ENCODE measurements at regions of chr4 and their contacts with region 1.

Region 1: DNA sequence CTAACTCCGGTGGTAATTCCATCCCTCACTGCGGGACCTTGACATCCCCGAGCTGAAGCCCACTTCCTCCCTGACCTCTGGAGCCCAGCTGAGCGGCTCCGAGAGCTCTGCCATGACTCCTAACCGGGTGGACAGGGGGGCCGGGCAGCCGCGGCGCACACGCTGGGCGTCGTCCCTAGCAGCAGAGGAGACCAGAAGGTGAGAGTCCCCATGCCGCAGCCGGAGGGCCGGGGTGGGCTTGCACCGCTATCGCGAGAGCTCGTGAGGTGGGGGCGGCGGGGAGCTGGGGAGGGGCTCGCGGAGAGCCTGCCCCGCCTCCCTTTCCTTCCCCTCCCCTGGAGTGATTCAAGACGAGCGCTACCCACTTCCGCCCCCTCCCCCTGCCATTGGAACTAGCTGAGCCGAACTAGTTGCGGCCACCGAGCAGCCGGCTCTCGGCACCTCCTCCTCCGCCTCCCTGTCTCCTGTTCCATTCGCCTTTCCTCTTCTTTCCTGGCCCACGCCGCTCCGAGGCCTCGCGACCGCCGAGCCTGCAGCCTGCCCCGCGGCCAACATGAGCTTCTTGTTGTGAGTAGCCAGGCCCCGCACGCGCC is at the start of gene MOB1B:
- DNase-seq: peak; percentile 59
- ATAC-seq: peak; percentile 91
- H3K4me3 ChIP-seq: peak within 1 kb of the TSS; percentile 78 to 85
- H3K27ac ChIP-seq: peak within 1 kb of the TSS; percentile 35
- H3K4me1 ChIP-seq: peaks cover 4 to 16% of the 10 kb centered on the region in 2 experiments
- H3K27me3 ChIP-seq: no peaks in the 10 kb centered on the region
- CTCF ChIP-seq: 0 out of 6 replicates have a peak, but pooled peaks of 1 of the 3 experiments have one; percentile 11
- POLR2A ChIP-seq: peak; percentile 46
- RAD21 ChIP-seq: no peak
- total RNA-seq, gene MOB1B: 33.2 TPM

Region 2: DNA sequence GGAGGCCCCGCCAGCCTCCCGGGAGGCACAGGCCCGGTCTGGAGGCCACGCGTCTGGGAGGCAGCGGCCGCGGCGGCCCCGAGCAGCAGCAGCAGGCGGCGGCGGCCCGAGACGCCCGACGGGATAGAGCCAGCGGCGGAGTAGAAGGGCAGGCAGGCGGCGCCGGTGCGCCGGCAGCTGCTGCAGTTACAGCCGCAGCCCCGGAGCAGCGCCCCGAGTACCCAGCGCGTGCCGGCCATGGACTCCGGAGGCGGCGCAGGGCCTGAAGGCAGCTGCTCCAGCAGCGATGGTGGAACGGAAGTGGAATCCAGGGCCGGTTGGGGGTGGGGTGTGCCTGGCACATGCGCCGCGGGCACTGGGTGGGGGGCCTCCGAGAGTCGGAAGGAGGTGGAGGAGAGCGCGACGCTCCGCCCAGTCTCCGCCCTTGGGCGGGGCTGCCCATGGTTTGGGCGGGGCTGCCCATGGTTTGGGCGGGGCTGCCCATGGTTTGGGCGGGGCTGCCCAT is 62.4 kb before region 1 on chr4 and contains the start of gene GRSF1:
- CTCF ChIA-PET with region 1: no interaction called
- POLR2A ChIA-PET with region 1: interaction called, 3 read pairs
- RAD21 ChIA-PET with region 1: no interaction called
- intact Hi-C with region 1: loop called (anchors 2 kb)
- DNase-seq: peak; percentile 82
- ATAC-seq: peak; percentile 90
- H3K4me3 ChIP-seq: peak within 1 kb of the TSS; percentile 91 to 98
- H3K27ac ChIP-seq: peak within 1 kb of the TSS; percentile 97
- H3K4me1 ChIP-seq: peaks cover 3 to 15% of the 10 kb centered on the region in 2 experiments; a peak in 3 of 4 replicates
- H3K27me3 ChIP-seq: no peaks in the 10 kb centered on the region
- CTCF ChIP-seq: no peak
- POLR2A ChIP-seq: peak; percentile 73
- RAD21 ChIP-seq: no peak
- total RNA-seq, gene GRSF1: 131 TPM